ENCODE measurements at regions of chr22 and their contacts with region 1.

Region 1: GRCh38 chr22:20174785-20175596 is 24.1 kb upstream of the CCDC188 start:
- DNase-seq: no peak
- ATAC-seq: no peak

Region 2: GRCh38 chr22:20111045-20111688 is 63.8 kb before region 1 on chr22:
- intact Hi-C with region 1: no loop called
- DNase-seq: no peak
- ATAC-seq: no peak

Region 3: DNA sequence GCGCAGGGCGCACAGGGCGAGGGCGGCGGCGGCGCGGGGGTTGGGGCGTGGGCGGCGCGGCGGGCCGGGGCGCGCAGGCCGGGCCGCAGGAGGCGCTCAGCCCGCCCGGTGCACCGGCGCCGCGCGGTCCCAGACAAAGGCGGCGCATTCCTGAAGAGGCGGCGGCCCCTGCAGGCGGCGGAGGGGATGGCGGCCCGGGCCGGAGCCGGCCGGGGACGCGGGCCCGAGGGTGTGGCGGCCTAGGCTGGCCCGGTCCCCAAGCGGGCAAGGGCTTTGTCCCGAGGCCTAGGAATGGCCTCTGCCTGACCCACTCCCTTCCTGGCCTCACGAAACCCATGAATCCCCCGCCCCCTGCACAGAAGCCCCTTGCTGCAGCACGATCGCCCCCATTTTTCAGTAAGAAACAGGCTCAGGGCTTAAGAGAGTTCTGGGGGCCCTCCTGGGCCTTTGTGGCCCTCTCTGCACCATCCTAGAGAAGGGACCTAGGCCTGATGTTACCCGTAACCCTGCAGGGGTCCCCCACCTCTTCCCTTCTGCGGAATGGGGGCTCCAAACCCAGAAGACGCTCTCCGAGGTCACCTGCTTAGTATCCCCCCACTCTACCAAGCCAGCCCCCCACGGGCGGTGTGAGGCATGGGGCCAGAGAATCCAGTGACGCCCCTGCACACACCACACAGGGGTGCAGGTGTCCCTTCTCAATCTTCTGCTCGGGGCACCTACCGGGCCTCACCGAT is 93.5 kb after region 1 on chr22 and contains the start of gene RTN4R:
- intact Hi-C with region 1: loop called (anchors 5 kb)
- DNase-seq: no peak
- ATAC-seq: peak; percentile 70
- total RNA-seq, gene RTN4R: 4.4 TPM

Region 4: DNA sequence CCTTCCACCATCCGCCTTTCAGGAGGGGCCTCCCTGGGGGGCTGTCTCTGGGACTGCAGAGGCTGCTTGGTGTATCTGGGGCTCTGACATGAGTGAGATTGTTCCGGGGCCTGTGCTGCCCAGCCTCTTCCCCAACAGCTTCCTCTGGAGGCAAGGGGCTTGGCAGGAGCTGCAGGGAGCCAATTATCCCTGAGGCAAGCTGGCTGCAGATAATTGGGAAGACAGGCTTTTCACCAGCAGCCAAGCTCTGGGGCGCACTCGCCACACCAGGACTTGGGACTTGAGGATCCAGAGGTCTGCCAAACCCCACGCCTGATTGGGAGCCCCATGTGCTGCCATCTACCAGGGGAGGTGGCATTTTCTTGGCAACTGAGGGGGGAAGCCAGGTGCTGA is 108.7 kb after region 1 on chr22:
- intact Hi-C with region 1: no loop called
- DNase-seq: no peak
- ATAC-seq: no peak

Region 5: GRCh38 chr22:20298803-20299735 is 124.1 kb after region 1 on chr22:
- intact Hi-C with region 1: no loop called
- DNase-seq: peak; percentile 85
- ATAC-seq: peak; percentile 92